Dendritic cell treated with granulocyte-macrophage colony-stimulating factor and Interleukin-4, amounts not matched to agents 40 ng/mL and 50 ng/mL, for 4 days (primary cell): ENCODE measurements at regions of chr15 and their contacts with region 1.

Region 1: GRCh38 chr15:45429974-45430792 is 51.8 kb upstream of the GATM start:
- H3K4me3 Mint-ChIP-seq: peak overlapping the region; percentile 69
- H3K27ac Mint-ChIP-seq: peak overlapping the region; percentile 20
- H3K4me1 Mint-ChIP-seq: peaks cover 14% of the 10 kb centered on the region
- H3K27me3 Mint-ChIP-seq: peaks cover 3% of the 10 kb centered on the region

Region 2: DNA sequence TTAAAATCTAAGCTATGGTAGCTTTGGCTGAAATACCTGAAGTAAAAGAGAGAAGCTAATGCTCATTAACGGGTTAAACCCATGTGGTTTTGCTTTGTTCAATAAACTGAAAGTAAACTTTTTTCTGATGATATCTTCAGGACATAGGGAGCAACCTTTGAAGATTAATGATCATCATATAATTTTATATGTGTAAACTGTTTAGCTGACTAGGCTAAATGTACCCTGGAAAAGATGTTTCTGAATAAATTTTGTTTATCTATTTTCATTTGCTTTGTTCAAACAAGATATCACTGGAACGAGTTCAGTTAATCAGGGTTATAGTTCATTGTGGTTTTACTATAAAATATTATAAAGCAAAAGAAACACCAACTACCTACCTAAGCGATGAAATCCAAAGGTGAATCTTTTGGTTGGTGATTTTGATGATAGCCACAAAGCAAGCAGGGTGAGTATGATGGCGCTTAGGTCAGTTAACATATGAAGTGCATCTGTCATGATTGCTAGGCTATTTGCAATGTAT is 80.6 kb after region 1 on chr15:
- intact Hi-C with region 1: loop called (anchors 10 kb)
- H3K4me3 Mint-ChIP-seq: no peak overlapping the region
- H3K27ac Mint-ChIP-seq: no peak overlapping the region
- H3K4me1 Mint-ChIP-seq: no peaks in the 10 kb centered on the region
- H3K27me3 Mint-ChIP-seq: peaks cover 3% of the 10 kb centered on the region

Region 3: DNA sequence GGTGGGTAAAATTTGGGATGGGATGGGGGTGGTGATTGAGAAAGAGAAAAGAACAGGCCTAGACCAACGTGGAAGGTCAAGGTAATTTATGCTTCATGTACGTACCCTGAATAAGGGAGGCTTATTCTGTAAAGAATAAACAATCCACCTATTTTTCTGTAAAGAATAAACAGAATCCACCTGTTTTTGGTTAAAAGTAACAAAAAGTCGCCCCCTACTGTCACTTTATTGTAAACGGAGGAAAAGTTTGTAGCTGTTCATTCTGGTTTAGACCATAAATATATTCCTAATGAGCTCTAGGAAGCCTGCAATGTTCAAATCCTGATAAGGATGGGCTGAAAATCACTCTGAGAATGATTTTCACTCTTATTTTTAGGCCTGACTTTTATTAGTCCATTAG is 181.1 kb after region 1 on chr15:
- intact Hi-C with region 1: loop called (anchors 1 kb)
- H3K4me3 Mint-ChIP-seq: no peak overlapping the region
- H3K27ac Mint-ChIP-seq: peak overlapping the region; percentile 34
- H3K4me1 Mint-ChIP-seq: peaks cover 38% of the 10 kb centered on the region
- H3K27me3 Mint-ChIP-seq: no peaks in the 10 kb centered on the region

Region 4: DNA sequence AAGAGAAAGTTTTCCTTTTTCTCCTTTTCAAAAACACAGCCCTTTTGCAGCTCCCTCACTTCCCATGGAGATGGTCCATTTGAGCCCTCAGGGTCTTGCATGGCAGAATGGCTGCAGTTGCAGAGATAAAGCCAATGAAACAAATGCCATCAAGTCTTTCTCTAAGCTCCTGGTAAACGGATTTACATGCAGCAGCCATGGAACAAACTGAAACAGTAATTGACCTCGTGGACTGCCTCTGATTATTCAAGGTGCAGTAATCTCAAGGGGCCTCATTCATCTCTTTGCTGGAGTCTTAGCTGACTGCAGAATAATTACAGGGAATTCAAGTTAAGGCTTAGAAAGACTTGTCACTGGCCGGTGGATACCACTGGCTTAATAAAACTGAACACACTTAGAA is 329.8 kb after region 1 on chr15:
- intact Hi-C with region 1: no loop called
- H3K4me3 Mint-ChIP-seq: no peak overlapping the region
- H3K27ac Mint-ChIP-seq: no peak overlapping the region
- H3K4me1 Mint-ChIP-seq: no peaks in the 10 kb centered on the region
- H3K27me3 Mint-ChIP-seq: peaks cover 10% of the 10 kb centered on the region